Lower leg skin (tissue), 4 donors: ENCODE measurements at regions of chr11 and their contacts with region 1.

Region 1: GRCh38 chr11:75896843-75897419 is 81.9 kb downstream of the UVRAG start:
- DNase-seq: no peak
- H3K4me3 ChIP-seq: no peak overlapping the region
- CTCF ChIP-seq: peak in 1 of 3 donors; percentile 28
- POLR2A ChIP-seq: no peak

Region 2: DNA sequence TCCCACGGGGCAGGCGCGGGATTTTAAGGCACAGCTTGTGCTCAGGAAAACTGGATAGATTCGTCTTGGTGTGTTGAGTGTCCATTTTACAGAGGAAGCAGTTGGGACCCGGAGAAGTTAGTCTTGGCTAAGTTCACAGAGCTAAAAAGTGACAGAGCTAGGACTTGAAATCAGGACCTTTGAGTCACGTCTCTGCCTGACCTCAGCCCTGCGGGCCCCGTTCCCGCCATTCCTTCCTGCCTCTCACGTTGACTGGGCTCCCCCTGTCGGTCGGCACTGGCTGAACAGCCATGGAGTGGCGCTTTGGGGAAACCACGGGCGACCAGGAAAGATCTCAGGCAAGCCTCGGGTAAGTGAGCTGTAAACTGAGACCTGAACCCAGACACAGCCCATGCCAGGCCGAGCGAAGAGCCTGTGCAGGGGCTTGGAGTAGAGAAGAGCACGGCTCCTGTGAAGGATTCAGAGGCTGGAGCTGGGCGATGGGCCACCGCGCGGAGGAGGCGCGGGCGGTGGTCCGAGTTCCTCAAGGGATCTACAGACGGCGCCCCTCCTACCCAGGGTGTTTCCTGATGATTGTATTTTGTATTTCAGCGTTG is 255.3 kb after region 1 on chr11:
- intact Hi-C with region 1: loop called (anchors 5 kb)
- DNase-seq: peak; percentile 80 to 98
- H3K4me3 ChIP-seq: no peak overlapping the region
- CTCF ChIP-seq: peak in 1 of 3 donors; percentile 90
- POLR2A ChIP-seq: no peak

Region 3: GRCh38 chr11:76329084-76329984 is 432.4 kb after region 1 on chr11:
- intact Hi-C with region 1: loop called (anchors 10 kb)
- DNase-seq: peak in 1 of 2 donors; percentile 78
- H3K4me3 ChIP-seq: no peak overlapping the region
- CTCF ChIP-seq: no peak
- POLR2A ChIP-seq: no peak